ENCODE measurements at regions of chr15 and their contacts with region 1.

Region 1: DNA sequence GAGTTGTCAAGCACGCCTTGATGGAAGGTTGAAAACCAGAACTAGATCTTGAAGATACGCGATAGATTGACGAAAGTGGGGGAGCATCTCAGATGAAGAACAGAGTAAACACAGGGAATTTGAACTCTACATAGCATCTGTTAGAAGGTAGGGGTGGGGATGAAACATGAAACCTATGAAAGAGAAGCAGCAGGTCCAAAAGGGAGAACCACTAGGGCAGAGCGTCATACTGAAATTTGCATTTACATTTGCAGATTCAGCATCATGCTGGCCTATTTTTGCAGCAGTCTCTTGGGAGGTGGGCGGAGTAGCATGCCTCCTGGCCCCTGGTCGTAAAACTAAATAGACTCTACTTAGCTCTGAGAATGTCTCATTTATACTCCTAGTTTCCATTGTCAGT is 46.1 kb upstream of the RASGRP1 start:
- DNase-seq: peak; percentile 38 to 74 (median 49)
- H3K4me3 ChIP-seq: no peak overlapping the region
- H3K4me3 Mint-ChIP-seq: peak overlapping the region in 7 of 8 donors; percentile 2 to 82 (median 55)
- H3K27ac ChIP-seq: peak overlapping the region; percentile 33
- H3K27ac Mint-ChIP-seq: peak overlapping the region; percentile 66 to 95 (median 90)
- H3K4me1 ChIP-seq: peaks cover 48% of the 10 kb centered on the region
- H3K4me1 Mint-ChIP-seq: peaks cover 34 to 62% (median 52%) of the 10 kb centered on the region in 4 donors
- H3K27me3 ChIP-seq: no peaks in the 10 kb centered on the region
- H3K27me3 Mint-ChIP-seq: no peaks in the 10 kb centered on the region

Region 2: GRCh38 chr15:38430436-38430760 is 180.3 kb before region 1 on chr15:
- CTCF ChIA-PET with region 1: no interaction called
- POLR2A ChIA-PET with region 1: no interaction called
- intact Hi-C with region 1: no loop called
- DNase-seq: no peak
- H3K4me3 ChIP-seq: no peak overlapping the region
- H3K4me3 Mint-ChIP-seq: no peak overlapping the region
- H3K27ac ChIP-seq: no peak overlapping the region
- H3K27ac Mint-ChIP-seq: no peak overlapping the region
- H3K4me1 ChIP-seq: no peaks in the 10 kb centered on the region
- H3K4me1 Mint-ChIP-seq: no peaks in the 10 kb centered on the region
- H3K27me3 ChIP-seq: no peaks in the 10 kb centered on the region
- H3K27me3 Mint-ChIP-seq: peaks cover 4 to 11% of the 10 kb centered on the region in 2 donors

Region 3: DNA sequence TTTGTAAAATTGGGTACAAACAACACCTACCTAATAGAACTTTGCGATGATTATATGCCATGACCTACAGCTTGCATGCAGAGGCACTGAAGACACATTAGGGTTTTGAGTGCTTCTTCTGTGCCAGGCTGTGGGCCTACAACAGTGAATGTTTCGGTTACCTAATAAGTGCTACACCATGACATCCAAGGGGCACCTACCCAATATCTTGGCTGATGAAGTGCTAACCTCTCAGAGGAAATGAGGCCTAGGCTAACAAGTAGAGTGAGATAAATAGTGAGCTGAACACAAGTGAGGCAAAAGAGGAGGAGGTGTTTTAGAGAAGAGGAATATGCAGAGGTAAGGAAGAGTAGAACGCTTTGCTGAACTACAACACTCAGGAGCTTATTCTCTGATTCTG is 33.9 kb before region 1 on chr15:
- CTCF ChIA-PET with region 1: no interaction called
- POLR2A ChIA-PET with region 1: interaction called, 4 read pairs
- intact Hi-C with region 1: loop called (anchors 5 kb)
- DNase-seq: no peak
- H3K4me3 ChIP-seq: no peak overlapping the region
- H3K4me3 Mint-ChIP-seq: peak overlapping the region in 7 of 8 donors; percentile 29 to 76 (median 64)
- H3K27ac ChIP-seq: peak overlapping the region; percentile 20
- H3K27ac Mint-ChIP-seq: peak overlapping the region in 6 of 7 donors; percentile 0 to 76 (median 48)
- H3K4me1 ChIP-seq: peaks cover 29% of the 10 kb centered on the region
- H3K4me1 Mint-ChIP-seq: peaks cover 18 to 34% (median 27%) of the 10 kb centered on the region in 4 donors
- H3K27me3 ChIP-seq: no peaks in the 10 kb centered on the region
- H3K27me3 Mint-ChIP-seq: no peaks in the 10 kb centered on the region

Region 4: GRCh38 chr15:38671675-38672254 is 61.0 kb after region 1 on chr15:
- CTCF ChIA-PET with region 1: interaction called, 3 read pairs
- POLR2A ChIA-PET with region 1: interaction called, 10 read pairs
- intact Hi-C with region 1: loop called (anchors 5 kb)
- DNase-seq: peak; percentile 70 to 87 (median 78)
- H3K4me3 ChIP-seq: peak overlapping the region; percentile 1 to 24
- H3K4me3 Mint-ChIP-seq: peak overlapping the region in 7 of 8 donors; percentile 67 to 79 (median 72)
- H3K27ac ChIP-seq: peak overlapping the region; percentile 89
- H3K27ac Mint-ChIP-seq: peak overlapping the region; percentile 94 to 100 (median 99)
- H3K4me1 ChIP-seq: peaks cover 83% of the 10 kb centered on the region
- H3K4me1 Mint-ChIP-seq: peaks cover 57 to 79% (median 64%) of the 10 kb centered on the region in 4 donors
- H3K27me3 ChIP-seq: no peaks in the 10 kb centered on the region
- H3K27me3 Mint-ChIP-seq: no peaks in the 10 kb centered on the region

Measured in CD4-positive, alpha-beta memory T cell (primary cell).